MCF 10A (cell line): ENCODE measurements at regions of chr17 and their contacts with region 1.

Region 1: DNA sequence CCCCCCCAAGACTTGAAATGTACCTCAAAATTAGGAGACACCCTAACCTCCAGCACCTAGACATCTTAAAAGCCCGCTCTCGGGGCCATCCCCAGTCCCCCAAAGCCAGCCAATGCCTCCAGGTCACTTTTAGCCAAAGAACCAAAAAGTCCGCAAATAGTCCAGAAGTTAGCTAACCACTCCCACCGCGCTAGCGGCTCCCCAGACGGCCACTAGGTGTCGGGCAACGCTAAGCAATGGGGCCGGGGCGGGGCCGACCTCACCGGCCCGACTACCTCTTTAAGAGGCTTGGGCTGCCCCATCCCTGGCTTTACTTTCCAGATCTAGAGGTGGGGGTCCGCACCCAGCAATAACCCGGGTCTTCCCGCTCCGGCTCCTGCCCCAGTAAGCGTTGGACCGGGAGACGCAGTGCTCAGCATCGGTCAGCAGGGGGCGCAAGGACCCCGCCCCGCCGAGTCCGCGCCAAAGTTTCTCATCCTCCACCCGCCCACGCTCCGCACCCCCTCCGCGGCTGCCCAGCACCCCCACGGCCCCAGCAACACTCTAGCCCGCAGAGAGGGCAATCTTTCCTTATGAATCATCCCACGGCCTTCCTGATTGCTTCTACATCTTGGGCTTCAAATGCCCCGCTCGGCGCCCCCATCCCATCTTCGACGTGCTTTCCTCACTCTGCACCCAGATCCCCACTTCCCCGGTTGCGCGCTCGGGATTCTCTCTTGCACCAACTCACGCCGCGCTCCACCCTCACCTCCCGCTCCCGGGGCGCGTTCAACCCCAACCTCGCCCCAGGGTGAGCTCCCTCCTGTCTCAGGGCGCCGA is 765 bp downstream of the COL1A1 start:
- DNase-seq: peak; percentile 90
- H3K4me3 Mint-ChIP-seq: peak overlapping the region; percentile 78
- H3K27ac Mint-ChIP-seq: peak overlapping the region; percentile 64
- H3K4me1 Mint-ChIP-seq: peaks cover 20% of the 10 kb centered on the region
- H3K27me3 Mint-ChIP-seq: peaks cover 9% of the 10 kb centered on the region
- CTCF ChIP-seq: peak; percentile 99

Region 2: DNA sequence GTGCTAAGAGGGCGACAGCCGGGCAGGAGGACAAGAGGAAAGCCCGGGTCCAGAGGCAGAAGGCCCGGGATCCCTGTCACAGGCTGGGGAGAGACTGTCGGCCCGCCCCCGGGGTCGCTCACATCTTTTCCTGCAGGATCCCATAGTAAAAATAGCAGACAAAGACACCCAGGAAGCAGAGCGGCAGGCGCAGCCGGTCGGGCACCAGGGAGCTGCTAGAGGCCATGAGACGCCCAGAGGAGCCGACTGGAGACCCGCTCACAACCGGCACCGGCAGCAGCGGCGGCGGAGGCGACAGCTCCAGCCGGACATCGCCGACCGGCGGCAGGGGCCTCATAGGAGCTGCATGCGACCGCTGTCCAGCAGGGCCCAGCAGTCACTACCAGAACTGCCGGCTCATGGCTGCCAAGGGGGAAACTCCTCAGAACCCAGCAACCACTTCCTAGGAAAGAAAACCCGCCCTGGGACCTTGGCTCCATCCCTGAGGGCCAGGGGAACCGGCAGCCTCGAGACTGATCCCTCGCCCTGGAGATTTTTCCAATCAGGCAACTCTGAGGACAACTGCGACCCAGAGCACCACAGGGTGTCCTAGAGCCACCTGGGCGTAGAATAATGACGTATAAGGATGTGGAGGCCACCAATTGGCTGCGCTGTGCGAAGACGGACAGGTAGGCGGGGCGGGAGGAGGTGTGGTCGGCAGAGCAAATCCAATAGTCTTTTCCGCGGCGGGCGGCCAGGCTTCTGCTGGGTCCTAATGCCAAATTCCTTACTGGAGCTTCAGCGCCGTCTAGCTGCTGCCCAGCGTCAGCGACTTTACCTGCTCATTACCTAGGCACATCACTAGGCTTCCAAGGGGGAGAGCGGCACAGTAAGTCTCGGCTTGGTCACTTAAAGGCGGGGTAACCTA is 492.8 kb before region 1 on chr17 and contains the start of gene SLC35B1:
- CTCF ChIA-PET with region 1: no interaction called
- POLR2A ChIA-PET with region 1: no interaction called
- intact Hi-C with region 1: no loop called
- DNase-seq: peak; percentile 99
- H3K4me3 Mint-ChIP-seq: peak within 1 kb of the TSS; percentile 83
- H3K27ac Mint-ChIP-seq: peak within 1 kb of the TSS; percentile 100
- H3K4me1 Mint-ChIP-seq: peaks cover 23% of the 10 kb centered on the region
- H3K27me3 Mint-ChIP-seq: no peaks in the 10 kb centered on the region
- CTCF ChIP-seq: peak; percentile 62
- total RNA-seq, gene SLC35B1: 99.6 and 130 TPM in 2 replicates

Region 3: DNA sequence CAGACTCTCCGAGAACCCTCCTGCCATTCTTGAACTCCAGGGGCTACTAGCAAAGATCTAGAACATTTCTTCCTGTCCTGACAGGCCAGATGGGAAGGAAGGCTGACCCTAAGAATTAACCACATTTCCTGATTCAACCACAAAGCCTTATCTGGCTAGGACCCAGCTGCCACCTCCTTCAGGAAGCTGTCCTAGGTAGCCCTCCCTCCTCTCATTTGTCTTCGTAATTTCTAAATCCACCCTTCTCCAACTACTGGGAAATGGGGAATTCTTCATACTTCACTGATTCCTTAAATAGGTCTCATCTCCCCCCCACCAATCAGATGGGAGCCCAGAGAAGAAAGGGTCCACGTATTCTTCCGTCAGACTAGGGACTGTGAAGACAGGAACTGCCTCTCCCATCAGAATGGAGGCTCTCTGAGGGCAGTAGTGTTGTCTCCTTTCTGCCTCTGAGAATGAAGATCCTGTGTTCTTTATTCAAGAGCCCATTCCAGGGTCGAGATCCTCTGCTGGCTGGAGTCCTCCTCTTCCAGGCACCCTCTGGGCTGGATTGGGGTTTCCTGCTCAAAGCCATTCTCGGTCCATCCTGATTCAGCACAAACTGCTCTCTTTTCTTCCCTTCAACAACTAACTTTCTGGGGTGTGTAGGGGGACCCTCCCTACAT is 72.8 kb before region 1 on chr17:
- CTCF ChIA-PET with region 1: no interaction called
- POLR2A ChIA-PET with region 1: no interaction called
- intact Hi-C with region 1: no loop called
- DNase-seq: peak; percentile 49
- H3K4me3 Mint-ChIP-seq: no peak overlapping the region
- H3K27ac Mint-ChIP-seq: no peak overlapping the region
- H3K4me1 Mint-ChIP-seq: peaks cover 12% of the 10 kb centered on the region
- H3K27me3 Mint-ChIP-seq: peaks cover 17% of the 10 kb centered on the region
- CTCF ChIP-seq: no peak

Region 4: GRCh38 chr17:50169121-50169764 is 31.4 kb before region 1 on chr17:
- CTCF ChIA-PET with region 1: interaction called, 122 read pairs
- POLR2A ChIA-PET with region 1: interaction called, 9 read pairs
- intact Hi-C with region 1: loop called (anchors 1 kb)
- DNase-seq: peak; percentile 68
- H3K4me3 Mint-ChIP-seq: no peak overlapping the region
- H3K27ac Mint-ChIP-seq: no peak overlapping the region
- H3K4me1 Mint-ChIP-seq: peaks cover 21% of the 10 kb centered on the region
- H3K27me3 Mint-ChIP-seq: no peaks in the 10 kb centered on the region
- CTCF ChIP-seq: peak; percentile 69

Region 5: DNA sequence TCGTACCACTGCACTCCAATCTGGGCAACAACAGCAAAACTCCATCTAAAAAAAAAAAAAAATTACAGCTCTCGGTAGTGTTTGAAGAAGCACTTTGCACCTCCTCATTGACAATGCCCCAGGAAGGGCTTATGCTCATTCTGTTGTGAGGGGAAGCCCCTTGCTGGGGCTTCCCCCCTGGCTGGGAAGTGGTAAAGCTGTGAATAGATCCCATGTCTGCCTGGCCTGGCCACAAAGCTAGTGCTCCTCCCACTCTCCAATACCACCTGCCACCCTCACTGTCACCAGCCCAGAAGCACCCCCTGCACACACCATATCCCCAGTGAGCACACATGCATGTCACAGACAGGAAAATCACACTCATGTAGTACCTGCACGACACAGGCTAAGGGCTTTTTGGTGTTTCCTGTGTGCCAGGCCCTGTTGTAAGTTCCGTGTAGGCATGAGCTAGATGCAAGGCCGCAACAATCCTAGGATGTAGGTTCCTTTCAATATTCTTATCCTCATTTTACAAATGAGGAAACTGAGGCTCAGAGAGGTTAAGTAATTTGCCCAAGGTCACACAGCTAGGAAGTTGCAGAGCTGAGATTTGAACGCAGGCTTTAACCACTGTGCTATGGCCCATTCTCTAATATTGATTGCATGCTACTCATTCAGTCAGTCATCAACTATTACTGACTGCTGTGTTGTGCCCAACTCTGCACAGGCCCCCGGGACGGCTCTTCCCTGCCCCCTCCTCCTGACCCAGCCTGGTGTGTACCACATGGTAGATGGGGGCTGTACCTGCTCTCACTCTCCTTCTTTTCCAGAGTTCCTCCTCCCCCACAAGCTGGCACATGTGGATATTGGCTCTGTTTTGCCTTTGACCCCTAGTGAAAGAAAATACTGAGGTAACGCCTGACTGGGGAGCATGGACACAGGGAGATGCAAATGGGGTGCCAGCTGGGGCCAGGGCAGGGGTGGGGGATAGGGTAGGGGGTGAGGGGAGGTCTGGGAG is 12.7 kb after region 1 on chr17:
- CTCF ChIA-PET with region 1: interaction called, 43 read pairs
- POLR2A ChIA-PET with region 1: interaction called, 3 read pairs
- intact Hi-C with region 1: no loop called
- DNase-seq: no peak
- H3K4me3 Mint-ChIP-seq: no peak overlapping the region
- H3K27ac Mint-ChIP-seq: no peak overlapping the region
- H3K4me1 Mint-ChIP-seq: peaks cover 25% of the 10 kb centered on the region
- H3K27me3 Mint-ChIP-seq: no peaks in the 10 kb centered on the region
- CTCF ChIP-seq: no peak

Region 6: DNA sequence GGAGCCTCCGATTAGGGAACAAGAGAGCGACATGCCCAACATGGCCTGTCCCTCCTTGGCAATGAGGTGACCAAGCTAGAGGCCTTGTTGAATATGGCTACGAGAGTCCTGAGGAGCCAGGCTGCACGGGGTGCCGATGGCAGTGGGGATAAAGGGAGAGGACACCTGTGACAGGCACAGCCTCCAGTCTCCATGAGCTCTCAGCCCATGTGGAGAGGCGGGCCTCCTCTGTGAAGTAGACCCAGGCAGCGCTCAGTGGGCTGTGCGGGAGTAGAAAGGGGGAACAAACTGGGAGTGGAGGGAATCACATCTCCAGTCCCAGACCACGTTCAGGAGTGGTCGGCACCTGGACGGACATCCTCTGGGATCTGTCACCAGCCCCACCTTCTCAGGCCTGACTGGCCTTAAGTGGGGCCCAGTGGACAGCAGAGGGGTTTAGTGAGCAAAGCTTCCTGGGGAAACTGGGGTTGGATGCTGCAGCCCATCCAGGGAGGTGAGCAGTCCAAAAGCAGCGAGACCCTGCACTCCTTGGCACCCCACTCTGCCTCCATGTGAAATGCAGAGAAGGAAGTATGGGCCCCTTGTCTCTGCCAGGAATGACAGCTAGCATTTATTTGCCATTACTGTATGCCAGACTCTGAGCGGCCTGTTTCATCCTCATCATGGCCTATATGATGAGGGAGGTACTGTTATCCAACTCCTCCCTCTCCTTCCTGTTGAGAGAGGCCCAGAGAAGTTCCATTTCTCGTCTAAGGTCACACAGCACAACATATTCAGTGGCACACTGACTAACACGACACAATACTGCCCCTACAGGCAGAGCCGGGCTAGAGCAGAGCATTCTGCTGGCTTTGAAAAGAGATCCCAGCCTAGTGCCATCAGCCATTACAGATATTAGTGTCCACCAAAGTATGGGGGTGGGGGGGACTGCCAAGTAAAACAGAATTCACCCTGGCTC is 69.1 kb after region 1 on chr17:
- CTCF ChIA-PET with region 1: interaction called, 45 read pairs
- POLR2A ChIA-PET with region 1: interaction called, 11 read pairs
- intact Hi-C with region 1: loop called (anchors 1 kb)
- DNase-seq: peak; percentile 74
- H3K4me3 Mint-ChIP-seq: no peak overlapping the region
- H3K27ac Mint-ChIP-seq: no peak overlapping the region
- H3K4me1 Mint-ChIP-seq: peaks cover 30% of the 10 kb centered on the region
- H3K27me3 Mint-ChIP-seq: no peaks in the 10 kb centered on the region
- CTCF ChIP-seq: peak; percentile 57

Region 7: DNA sequence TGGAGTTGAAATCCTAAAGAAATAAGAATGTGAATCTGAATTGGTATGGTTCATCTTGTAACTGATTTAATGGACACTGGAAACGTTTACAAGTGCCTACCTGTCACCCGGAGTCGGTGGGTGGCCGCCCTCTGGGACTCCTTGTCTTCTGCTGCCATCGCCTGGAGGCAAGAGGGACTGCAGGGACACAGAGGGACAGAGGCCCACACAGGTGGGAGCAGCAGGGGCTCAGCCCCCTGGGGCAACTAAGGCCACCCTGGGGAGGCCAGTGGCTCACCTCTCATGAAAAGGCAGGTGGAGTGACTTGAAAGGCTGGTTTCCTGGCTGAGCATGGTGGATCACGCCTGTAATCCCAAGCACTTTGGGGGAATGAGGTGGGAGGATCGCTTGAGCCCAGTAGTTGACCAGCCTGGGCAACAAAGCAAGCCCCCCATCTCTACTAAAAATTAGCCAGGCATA is 96.8 kb after region 1 on chr17:
- CTCF ChIA-PET with region 1: interaction called, 198 read pairs
- POLR2A ChIA-PET with region 1: interaction called, 17 read pairs
- intact Hi-C with region 1: loop called (anchors 1 kb)
- DNase-seq: peak; percentile 84
- H3K4me3 Mint-ChIP-seq: no peak overlapping the region
- H3K27ac Mint-ChIP-seq: no peak overlapping the region
- H3K4me1 Mint-ChIP-seq: no peaks in the 10 kb centered on the region
- H3K27me3 Mint-ChIP-seq: no peaks in the 10 kb centered on the region
- CTCF ChIP-seq: peak; percentile 99